ENCODE measurements at regions of chr14 and their contacts with region 1.

Region 1: DNA sequence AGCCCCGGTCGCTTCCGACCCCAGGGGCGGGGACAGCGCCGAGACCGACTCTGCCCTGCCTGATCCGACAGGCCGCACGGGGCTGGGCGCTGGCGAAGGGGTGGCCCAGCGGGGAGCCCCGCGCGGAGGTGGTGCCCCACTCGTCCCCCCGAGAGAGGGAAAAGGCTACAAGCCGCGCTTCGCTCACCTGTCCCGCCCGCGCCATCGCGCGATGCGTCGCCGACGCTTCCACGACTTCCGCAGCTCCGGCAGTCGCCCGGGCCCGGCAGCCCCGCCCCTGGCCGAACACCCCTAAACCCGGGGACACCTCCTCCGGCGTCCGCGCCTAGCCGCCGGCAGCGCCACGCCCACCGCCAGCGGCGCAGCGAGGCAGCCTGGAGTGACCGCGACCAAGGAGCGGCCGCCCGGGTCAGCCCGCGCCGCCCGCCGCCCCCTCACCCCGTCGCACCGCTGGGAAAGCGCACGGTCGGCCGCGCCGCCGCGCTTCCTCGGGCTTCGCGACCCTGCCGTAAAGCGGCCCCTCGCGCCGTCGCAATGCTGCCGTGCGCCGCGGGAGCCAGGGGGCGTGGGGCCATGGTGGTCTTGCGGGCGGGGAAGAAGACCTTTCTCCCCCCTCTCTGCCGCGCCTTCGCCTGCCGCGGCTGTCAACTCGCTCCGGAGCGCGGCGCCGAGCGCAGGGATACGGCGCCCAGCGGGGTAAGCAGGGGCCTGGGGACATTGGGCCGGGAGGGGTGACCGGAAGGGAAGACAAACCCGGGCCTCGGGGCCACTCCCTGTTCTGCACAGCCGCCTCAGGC is at the starts of genes BAG5 and COA8:
- DNase-seq: peak; percentile 83
- H3K4me3 Mint-ChIP-seq: peak within 1 kb of the TSS; percentile 96
- H3K27ac Mint-ChIP-seq: peak within 1 kb of the TSS; percentile 94
- H3K4me1 Mint-ChIP-seq: peaks cover 29% of the 10 kb centered on the region
- H3K27me3 Mint-ChIP-seq: no peaks in the 10 kb centered on the region
- total RNA-seq, gene BAG5: 33.8 and 34.1 TPM in 2 replicates
- total RNA-seq, gene COA8: 37.2 and 39.7 TPM in 2 replicates

Region 2: GRCh38 chr14:103500148-103500990 is 62.3 kb before region 1 on chr14:
- intact Hi-C with region 1: no loop called
- DNase-seq: peak; percentile 57
- H3K4me3 Mint-ChIP-seq: no peak overlapping the region
- H3K27ac Mint-ChIP-seq: peak overlapping the region; percentile 16
- H3K4me1 Mint-ChIP-seq: peaks cover 9% of the 10 kb centered on the region
- H3K27me3 Mint-ChIP-seq: no peaks in the 10 kb centered on the region

Region 3: DNA sequence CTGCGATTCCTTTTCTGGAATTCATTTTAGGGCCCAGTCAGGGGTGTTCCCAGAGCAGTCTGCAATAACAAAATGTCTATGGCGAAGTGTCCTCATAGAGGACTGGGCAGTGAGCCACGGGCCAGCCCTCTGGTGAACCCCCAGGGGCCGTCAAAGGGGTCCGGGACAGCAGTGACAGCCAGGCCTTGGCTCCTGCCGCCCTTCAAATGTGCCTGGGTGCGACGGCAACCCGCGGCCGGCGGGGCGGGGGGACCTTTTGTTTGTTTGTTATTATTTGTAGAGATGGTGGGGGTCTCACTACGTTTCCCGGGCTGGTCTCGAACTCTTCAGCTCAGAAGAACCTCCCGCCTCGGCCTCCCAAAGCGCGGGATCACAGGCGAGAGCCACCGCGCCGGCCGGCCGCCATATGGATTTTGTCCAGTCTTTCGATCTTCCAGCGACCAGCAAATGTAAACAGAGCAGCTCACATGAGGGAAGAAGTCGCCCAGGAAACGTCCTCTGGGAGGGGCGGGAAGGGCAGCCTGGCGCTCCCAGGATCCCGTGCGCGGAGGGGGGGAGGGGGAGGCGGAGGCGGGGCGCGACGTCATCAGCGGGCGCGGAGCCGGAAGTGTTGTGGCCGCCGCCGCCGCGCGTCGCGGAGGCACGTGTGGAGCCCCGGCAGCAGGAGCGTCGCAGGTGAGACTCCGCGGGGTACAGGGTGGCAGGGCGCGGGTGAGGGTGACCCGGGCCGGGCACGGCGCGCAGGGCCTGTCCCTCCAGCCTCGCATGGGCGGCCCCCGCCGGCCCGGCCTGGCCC is 33.8 kb before region 1 on chr14 and contains the start of gene TRMT61A:
- intact Hi-C with region 1: loop called (anchors 1 kb)
- DNase-seq: peak; percentile 66
- H3K4me3 Mint-ChIP-seq: peak within 1 kb of the TSS; percentile 99
- H3K27ac Mint-ChIP-seq: peak within 1 kb of the TSS; percentile 96
- H3K4me1 Mint-ChIP-seq: peaks cover 29% of the 10 kb centered on the region
- H3K27me3 Mint-ChIP-seq: peaks cover 8% of the 10 kb centered on the region
- total RNA-seq, gene TRMT61A: 23.4 and 23.7 TPM in 2 replicates

Region 4: DNA sequence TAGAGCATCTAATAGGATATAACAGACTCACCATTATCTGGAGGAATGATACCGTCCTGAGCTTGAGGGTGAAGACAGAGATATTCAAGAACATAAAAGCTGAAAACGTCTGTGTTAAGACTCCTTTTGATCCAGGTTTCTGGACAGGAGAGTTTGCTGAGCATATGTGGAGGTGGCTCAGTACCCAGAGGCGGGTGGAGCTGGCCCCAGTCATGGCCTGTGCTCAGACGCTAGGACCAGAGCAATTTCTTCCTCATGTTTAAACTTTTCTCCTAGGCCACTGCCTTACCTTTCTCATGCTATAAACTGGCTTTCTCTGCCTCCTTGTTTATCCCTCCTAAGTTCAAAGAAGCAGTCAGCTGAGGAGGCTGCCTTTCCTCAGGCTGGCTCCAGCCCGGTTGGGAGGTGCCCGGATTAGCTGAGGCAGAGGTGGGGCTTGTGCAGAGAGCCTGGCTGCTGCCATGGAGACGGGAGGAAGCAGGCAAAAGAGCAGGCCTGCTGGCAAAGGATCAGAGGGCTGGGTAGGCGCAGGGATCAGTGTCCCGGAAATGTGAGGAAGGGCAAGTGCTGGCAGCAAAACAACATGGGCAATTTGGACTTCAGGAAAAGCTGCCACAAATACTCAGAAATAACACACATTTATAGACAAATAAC is 13.9 kb after region 1 on chr14:
- intact Hi-C with region 1: loop called (anchors 1 kb)
- DNase-seq: no peak
- H3K4me3 Mint-ChIP-seq: no peak overlapping the region
- H3K27ac Mint-ChIP-seq: no peak overlapping the region
- H3K4me1 Mint-ChIP-seq: no peaks in the 10 kb centered on the region
- H3K27me3 Mint-ChIP-seq: no peaks in the 10 kb centered on the region

Region 5: GRCh38 chr14:103628684-103629502 is 66.3 kb after region 1 on chr14 and contains the start of gene KLC1:
- intact Hi-C with region 1: loop called (anchors 1 kb)
- DNase-seq: peak; percentile 78
- H3K4me3 Mint-ChIP-seq: peak within 1 kb of the TSS; percentile 89
- H3K27ac Mint-ChIP-seq: peak within 1 kb of the TSS; percentile 86
- H3K4me1 Mint-ChIP-seq: peaks cover 14% of the 10 kb centered on the region
- H3K27me3 Mint-ChIP-seq: no peaks in the 10 kb centered on the region
- total RNA-seq, gene KLC1: 148 and 150 TPM in 2 replicates

Region 6: GRCh38 chr14:104157016-104157928 is 594.6 kb after region 1 on chr14:
- intact Hi-C with region 1: no loop called
- DNase-seq: no peak
- H3K4me3 Mint-ChIP-seq: no peak overlapping the region
- H3K27ac Mint-ChIP-seq: no peak overlapping the region
- H3K4me1 Mint-ChIP-seq: no peaks in the 10 kb centered on the region
- H3K27me3 Mint-ChIP-seq: no peaks in the 10 kb centered on the region

Measured in activated T-helper 1 cell treated with anti-CD3 and anti-CD28 coated beads, Interleukin-12 subunit alpha, Interleukin-12 subunit beta, Interleukin-2, Interleukin-4 antibody, amounts not matched to agents 30 ng/mL and 10 ng/mL and 1 ng/mL, durations not matched to agents 14 hours and 24 hours and 36 hours (primary cell).